ENCODE measurements at regions of chr12 and their contacts with region 1.

Region 1: GRCh38 chr12:118183705-118184104 is 47.8 kb downstream of the PEBP1 start:
- DNase-seq: no peak
- ATAC-seq: no peak

Region 2: DNA sequence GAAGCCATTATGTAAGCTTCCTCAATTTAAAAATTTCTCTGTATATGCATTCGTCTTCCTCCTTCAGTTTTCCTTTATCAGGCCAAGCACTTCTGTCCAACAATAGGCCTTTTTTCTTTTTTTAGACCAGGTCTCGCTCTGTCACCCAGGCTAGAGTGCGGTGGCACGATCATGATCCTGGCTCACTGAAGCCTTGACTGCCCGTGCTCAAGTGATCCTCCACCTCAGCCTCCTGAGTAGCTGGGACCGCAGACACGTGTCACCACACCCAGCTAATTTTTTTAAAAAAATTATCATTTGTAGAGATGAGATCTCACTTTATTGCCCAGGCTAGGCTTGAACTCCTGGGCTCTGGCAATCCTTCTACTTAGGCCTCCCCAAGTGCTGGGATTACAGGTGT is 163.2 kb after region 1 on chr12:
- intact Hi-C with region 1: no loop called
- DNase-seq: peak; percentile 21
- ATAC-seq: peak; percentile 69

Region 3: GRCh38 chr12:118376089-118377020 is 192.7 kb after region 1 on chr12 and contains the start of gene SUDS3:
- intact Hi-C with region 1: loop called (anchors 5 kb)
- DNase-seq: peak; percentile 96
- ATAC-seq: peak; percentile 44
- total RNA-seq, gene SUDS3: 21.2 TPM

Measured in left ventricle myocardium superior (tissue), 1 donor.